CD4-positive, alpha-beta memory T cell (primary cell): ENCODE measurements at regions of chr4 and their contacts with region 1.

Region 1: GRCh38 chr4:142307857-142308256 is 538.2 kb downstream of the INPP4B start:
- DNase-seq: no peak
- H3K4me3 ChIP-seq: no peak overlapping the region
- H3K4me3 Mint-ChIP-seq: no peak overlapping the region
- H3K27ac ChIP-seq: no peak overlapping the region
- H3K27ac Mint-ChIP-seq: peak overlapping the region in 2 of 7 donors; percentile 15 to 30
- H3K4me1 ChIP-seq: peaks cover 54% of the 10 kb centered on the region
- H3K4me1 Mint-ChIP-seq: peaks cover 20 to 60% (median 47%) of the 10 kb centered on the region in 4 donors
- H3K27me3 ChIP-seq: no peaks in the 10 kb centered on the region
- H3K27me3 Mint-ChIP-seq: no peaks in the 10 kb centered on the region

Region 2: DNA sequence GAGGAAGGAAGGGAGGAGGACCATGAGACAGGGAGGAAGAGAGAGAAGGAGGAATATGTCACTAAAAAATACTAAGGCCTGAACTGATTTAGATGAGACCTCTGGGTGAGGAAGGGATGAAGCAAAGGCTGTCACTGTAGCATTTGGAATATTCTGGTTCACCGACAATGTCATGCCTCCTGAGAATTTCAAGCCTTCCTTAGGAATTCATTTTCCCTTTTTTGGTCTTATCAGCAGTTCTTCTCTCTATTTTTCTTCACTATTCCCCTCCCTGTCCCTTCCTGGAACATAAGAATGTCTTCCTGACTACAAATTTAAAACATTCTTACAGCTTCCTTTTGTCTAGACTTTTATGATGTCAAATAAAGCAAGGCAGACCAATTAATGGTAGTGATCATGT is 10.4 kb after region 1 on chr4:
- CTCF ChIA-PET with region 1: interaction called, 4 read pairs
- POLR2A ChIA-PET with region 1: interaction called, 3 read pairs
- intact Hi-C with region 1: loop called (anchors 2 kb)
- DNase-seq: no peak
- H3K4me3 ChIP-seq: no peak overlapping the region
- H3K4me3 Mint-ChIP-seq: peak overlapping the region in 2 of 8 donors; percentile 22 to 47
- H3K27ac ChIP-seq: no peak overlapping the region
- H3K27ac Mint-ChIP-seq: peak overlapping the region; percentile 6 to 83 (median 28)
- H3K4me1 ChIP-seq: peaks cover 73% of the 10 kb centered on the region
- H3K4me1 Mint-ChIP-seq: peaks cover 74 to 83% (median 78%) of the 10 kb centered on the region in 4 donors
- H3K27me3 ChIP-seq: no peaks in the 10 kb centered on the region
- H3K27me3 Mint-ChIP-seq: no peaks in the 10 kb centered on the region